ENCODE measurements at regions of chr13 and their contacts with region 1.

Region 1: GRCh38 chr13:110561344-110562035 is at the start of gene RAB20:
- DNase-seq: peak; percentile 90 to 94
- H3K4me3 ChIP-seq: peak within 1 kb of the TSS; percentile 95 to 98
- H3K27ac ChIP-seq: peak within 1 kb of the TSS; percentile 99
- H3K4me1 ChIP-seq: peaks cover 0 to 46% (median 27%) of the 10 kb centered on the region in 4 donors
- H3K27me3 ChIP-seq: no peaks in the 10 kb centered on the region
- CTCF ChIP-seq: no peak

Region 2: DNA sequence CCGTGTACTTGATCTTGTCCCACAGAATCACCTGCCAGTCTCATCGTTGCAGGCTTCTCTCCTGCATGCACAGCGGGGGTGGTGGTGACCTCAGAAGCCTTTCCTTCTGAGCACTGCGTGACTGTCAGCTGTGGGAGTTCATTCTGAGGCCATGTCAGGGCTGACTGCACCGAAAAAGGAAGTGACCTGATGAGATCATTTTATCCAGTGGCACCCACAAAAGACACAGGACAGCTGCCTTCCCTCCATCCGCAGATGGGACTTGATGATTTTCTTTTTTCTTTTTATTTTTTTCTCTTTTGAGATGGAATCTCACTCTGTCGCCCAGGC is 89.7 kb before region 1 on chr13:
- intact Hi-C with region 1: loop called (anchors 10 kb)
- DNase-seq: peak; percentile 53 to 78
- H3K4me3 ChIP-seq: no peak overlapping the region
- H3K27ac ChIP-seq: peak overlapping the region; percentile 21 to 34
- H3K4me1 ChIP-seq: no peaks in the 10 kb centered on the region
- H3K27me3 ChIP-seq: no peaks in the 10 kb centered on the region
- CTCF ChIP-seq: no peak

Region 3: GRCh38 chr13:110509971-110510786 is 51.3 kb before region 1 on chr13:
- intact Hi-C with region 1: loop called (anchors 10 kb)
- DNase-seq: peak in 1 of 2 donors; percentile 71
- H3K4me3 ChIP-seq: no peak overlapping the region
- H3K27ac ChIP-seq: peak overlapping the region; percentile 51 to 79
- H3K4me1 ChIP-seq: peaks cover 0 to 56% (median 25%) of the 10 kb centered on the region in 4 donors
- H3K27me3 ChIP-seq: no peaks in the 10 kb centered on the region
- CTCF ChIP-seq: no peak

Region 4: DNA sequence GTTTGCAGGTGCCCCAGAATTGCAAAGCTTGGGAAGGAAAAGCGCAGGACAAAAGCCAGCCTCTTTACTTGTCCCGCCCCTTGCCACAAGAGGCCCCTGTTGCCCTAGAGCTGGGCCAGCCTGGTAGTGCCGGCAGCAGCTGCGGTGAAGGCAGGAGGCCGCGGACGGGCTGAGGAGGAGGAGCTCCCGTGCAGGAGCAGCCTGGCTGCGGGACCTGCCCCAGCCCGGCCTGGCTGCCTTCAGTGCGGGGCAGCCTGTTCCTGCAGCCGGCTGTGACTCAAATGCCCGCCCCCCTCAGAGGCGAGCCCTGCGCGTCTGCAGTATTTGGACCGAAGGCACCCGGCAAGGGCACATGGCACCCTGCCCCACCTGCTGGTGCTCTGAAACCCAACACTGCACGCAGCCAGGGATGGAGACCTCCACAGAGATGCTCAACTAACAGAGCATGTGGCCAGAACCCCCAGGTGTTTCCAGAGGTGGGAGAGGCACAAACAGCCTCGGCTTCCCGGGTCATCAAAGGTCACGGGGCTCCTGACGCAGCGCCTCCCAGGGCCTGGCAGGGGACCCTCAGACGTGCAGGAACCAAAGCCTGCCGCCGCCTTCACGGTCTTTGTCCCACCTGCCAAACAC is 83.5 kb after region 1 on chr13:
- intact Hi-C with region 1: no loop called
- DNase-seq: peak; percentile 47 to 88
- H3K4me3 ChIP-seq: no peak overlapping the region
- H3K27ac ChIP-seq: peak overlapping the region; percentile 24 to 53
- H3K4me1 ChIP-seq: peaks cover 0 to 30% (median 22%) of the 10 kb centered on the region in 4 donors
- H3K27me3 ChIP-seq: no peaks in the 10 kb centered on the region
- CTCF ChIP-seq: peak; percentile 29 to 46

Measured in tibial artery (tissue), 4 donors.